ENCODE measurements at regions of chr4 and their contacts with region 1.

Region 1: GRCh38 chr4:29151584-29151983 is 1568.6 kb upstream of the PCDH7 start:
- DNase-seq: no peak
- ATAC-seq: no peak
- H3K4me3 ChIP-seq: no peak overlapping the region
- H3K27ac ChIP-seq: no peak overlapping the region
- H3K4me1 ChIP-seq: no peaks in the 10 kb centered on the region
- H3K27me3 ChIP-seq: no peaks in the 10 kb centered on the region
- CTCF ChIP-seq: no peak
- POLR2A ChIP-seq: no peak

Region 2: GRCh38 chr4:30989508-30989907 is 1837.9 kb after region 1 on chr4:
- in situ Hi-C with region 1: no loop called
- intact Hi-C with region 1: loop called (anchors 10 kb)
- DNase-seq: no peak
- ATAC-seq: no peak
- H3K4me3 ChIP-seq: no peak overlapping the region
- H3K27ac ChIP-seq: no peak overlapping the region
- H3K4me1 ChIP-seq: no peaks in the 10 kb centered on the region
- H3K27me3 ChIP-seq: no peaks in the 10 kb centered on the region
- CTCF ChIP-seq: no peak
- POLR2A ChIP-seq: no peak

Measured in gastrocnemius medialis (tissue), 4 donors.